ENCODE measurements at regions of chr1 and their contacts with region 1.

Region 1: DNA sequence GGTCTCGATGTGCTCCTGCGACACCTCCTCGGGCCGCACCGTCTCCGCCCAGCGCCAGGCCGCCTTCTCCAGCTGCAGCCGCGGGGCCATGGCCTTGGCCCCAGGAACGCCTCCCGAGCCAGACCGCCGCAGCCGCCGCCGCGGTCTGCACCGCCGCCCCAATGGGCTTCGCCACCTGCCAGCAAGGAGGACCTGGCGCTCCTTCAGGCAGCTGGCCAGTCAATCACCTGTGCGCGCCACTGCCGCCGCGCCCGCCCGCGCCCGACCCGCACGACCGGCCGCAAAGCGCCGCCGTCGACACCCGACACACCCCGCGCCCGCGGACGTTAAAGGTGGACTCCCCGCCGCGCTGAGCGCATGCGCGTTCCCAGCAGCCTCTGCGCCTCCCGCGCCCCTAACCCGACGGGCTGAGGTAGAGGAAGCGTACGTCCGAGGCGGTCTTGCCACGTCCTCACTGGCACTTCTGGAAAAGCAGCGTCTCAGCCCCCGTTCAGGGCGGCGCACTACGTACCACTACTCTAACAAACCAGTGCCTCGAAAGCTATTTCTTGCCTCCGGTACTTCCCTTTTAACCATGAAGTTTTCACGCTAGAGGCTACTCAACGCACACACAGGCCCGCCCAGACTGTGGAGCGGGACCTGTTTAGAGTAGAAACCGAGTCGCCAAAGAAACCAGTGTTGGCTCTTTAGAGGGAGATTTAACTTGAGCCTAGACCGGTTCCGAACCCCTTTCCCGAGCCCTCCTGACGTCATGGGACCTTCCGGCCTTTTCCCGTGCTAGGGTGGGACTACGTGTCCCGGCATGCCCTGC is at the start of gene USP48:
- DNase-seq: peak; percentile 97 to 99 (median 98)
- H3K4me3 ChIP-seq: peak within 1 kb of the TSS; percentile 64 to 100 (median 99)
- H3K27ac ChIP-seq: peak within 1 kb of the TSS; percentile 95 to 100 (median 100)
- H3K27me3 ChIP-seq: no peaks in the 10 kb centered on the region
- CTCF ChIP-seq: peak in 12 of 56 donors; percentile 4 to 34 (median 15)
- total RNA-seq, gene USP48: 77.5 to 131 (median 105) TPM

Region 2: DNA sequence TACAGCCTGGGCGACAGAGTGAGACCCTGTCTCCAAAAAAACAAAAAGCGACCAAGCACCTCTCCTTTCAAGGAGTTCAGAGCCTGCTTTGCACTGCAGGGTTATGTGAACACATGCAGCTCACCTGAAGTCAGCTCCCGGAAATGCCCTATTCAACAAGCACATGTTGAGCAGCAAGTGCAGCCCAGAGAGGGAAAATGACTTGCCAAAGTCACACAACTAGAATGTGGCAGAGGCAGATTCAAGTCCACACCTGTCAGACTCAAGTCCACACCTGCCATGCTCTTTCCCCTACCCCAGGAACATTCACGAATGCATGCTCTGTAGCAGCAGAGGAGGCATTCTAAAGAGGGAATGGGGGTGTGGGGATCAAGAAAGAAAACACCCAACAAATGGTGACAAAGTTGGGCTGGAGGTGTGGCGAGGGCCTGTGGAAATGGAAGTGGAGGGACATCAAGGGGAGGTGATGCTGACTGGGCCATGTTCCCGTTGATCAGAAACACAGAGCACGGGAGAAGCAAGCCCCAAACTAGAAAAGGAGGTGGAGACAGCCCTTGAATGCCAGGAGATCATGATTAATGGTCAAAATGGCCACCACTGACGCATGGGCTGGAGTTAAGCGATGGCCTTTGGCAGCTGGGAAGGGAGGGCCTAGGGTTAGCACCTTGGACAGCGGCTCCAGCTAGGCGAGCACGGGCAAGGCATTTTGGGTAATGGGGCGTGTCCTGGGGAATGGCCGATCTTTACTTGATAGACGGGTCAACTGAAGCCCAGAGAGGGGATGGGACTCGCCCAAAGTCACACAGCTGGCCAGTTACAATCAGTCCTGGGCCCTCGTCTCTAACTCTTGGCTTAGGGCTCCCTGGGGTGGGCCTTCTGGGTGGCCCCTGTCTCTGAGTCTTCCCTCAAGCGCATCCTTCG is 135.4 kb before region 1 on chr1:
- intact Hi-C with region 1: no loop called
- DNase-seq: no peak
- H3K4me3 ChIP-seq: no peak overlapping the region
- H3K27ac ChIP-seq: peak overlapping the region in 1 of 59 donors; percentile 5
- H3K27me3 ChIP-seq: no peaks in the 10 kb centered on the region
- CTCF ChIP-seq: no peak

Region 3: DNA sequence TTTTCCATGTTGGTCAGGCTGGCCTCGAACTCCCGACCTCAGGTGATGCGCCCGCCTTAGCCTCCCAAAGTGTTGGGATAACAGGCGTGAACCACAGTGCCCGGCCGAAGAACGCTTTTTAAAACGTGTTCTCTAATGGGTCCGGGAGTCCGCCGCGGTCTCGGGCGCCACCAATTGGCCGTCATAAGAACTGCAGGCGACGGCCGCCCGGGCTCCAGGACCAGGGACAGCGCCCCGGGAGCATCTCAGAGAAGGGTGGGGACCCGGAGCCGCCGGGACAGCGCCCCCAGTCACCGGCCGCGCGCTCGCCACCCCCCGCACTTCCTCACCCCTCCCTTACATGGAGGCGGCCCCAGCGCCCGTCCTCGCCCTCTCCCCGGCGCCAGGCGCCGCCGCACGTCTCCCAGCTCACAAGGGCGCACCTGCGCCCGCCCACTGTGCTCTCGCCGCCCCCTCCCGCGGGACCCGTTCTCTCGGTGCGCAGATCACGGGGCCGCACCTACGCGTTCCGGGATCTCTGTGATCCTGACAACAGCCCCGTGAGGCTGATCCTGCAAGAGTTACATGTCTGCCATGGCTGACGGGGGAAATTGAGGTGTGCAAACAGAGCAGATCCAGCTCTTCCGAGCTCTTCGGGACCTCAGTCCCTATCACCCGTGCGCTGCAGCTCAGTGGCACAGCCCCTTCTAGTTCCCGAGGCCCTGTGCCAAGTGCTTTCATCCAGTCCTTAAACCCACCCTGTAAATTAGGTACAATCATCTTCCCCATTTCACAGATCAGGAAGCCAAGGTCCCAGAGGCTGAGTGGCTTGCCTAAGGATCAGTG is 123.8 kb before region 1 on chr1:
- intact Hi-C with region 1: loop called in 1 of 2 experiments (anchors 5 kb)
- DNase-seq: peak; percentile 74 to 88 (median 81)
- H3K4me3 ChIP-seq: peak overlapping the region in 58 of 59 donors; percentile 3 to 62 (median 44)
- H3K27ac ChIP-seq: peak overlapping the region in 46 of 59 donors; percentile 1 to 82 (median 54)
- H3K27me3 ChIP-seq: no peaks in the 10 kb centered on the region
- CTCF ChIP-seq: peak; percentile 74 to 99 (median 94)

Region 4: DNA sequence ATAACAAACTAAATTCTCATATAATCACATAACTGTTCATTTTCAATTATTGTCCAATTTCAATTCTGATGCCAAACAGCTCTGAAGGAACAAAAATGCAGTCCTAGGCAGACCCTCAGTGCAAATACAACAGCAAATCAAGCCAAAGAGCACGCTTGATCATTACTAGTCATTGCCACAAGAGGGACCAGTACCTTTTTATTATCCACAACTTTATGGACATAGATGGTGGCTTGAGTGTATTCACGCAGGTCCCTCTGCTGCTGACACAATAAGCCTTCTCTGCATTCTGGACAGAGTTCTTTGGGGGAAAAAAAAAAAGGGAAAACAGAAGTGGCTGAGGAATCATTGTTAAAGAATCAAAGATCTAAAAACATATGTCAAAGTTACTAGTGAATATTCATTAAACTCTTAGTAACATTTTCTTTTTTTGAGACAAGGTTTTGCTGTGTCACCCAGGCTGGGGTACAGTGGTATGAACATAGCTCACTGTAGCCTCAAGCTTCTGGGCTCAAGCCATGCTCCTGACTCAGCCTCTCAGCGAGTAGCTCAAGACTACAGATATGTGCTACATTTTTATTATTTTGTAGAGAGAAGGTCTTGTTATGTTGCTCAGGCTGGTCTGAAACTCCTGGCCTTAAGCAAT is 79.6 kb before region 1 on chr1:
- intact Hi-C with region 1: loop called (anchors 2 to 5 kb)
- DNase-seq: peak in 1 of 10 donors; percentile 62
- H3K4me3 ChIP-seq: peak overlapping the region in 8 of 59 donors; percentile 8 to 55 (median 18)
- H3K27ac ChIP-seq: peak overlapping the region in 55 of 59 donors; percentile 19 to 96 (median 87)
- H3K27me3 ChIP-seq: no peaks in the 10 kb centered on the region
- CTCF ChIP-seq: peak in 55 of 56 donors; percentile 27 to 67 (median 46)

Region 5: GRCh38 chr1:21725748-21726392 is 57.2 kb before region 1 on chr1:
- intact Hi-C with region 1: no loop called
- DNase-seq: no peak
- H3K4me3 ChIP-seq: no peak overlapping the region
- H3K27ac ChIP-seq: no peak overlapping the region
- H3K27me3 ChIP-seq: no peaks in the 10 kb centered on the region
- CTCF ChIP-seq: no peak

Region 6: GRCh38 chr1:21852282-21853128 is 69.4 kb after region 1 on chr1:
- intact Hi-C with region 1: no loop called
- DNase-seq: no peak
- H3K4me3 ChIP-seq: no peak overlapping the region
- H3K27ac ChIP-seq: no peak overlapping the region
- H3K27me3 ChIP-seq: no peaks in the 10 kb centered on the region
- CTCF ChIP-seq: no peak

Region 7: DNA sequence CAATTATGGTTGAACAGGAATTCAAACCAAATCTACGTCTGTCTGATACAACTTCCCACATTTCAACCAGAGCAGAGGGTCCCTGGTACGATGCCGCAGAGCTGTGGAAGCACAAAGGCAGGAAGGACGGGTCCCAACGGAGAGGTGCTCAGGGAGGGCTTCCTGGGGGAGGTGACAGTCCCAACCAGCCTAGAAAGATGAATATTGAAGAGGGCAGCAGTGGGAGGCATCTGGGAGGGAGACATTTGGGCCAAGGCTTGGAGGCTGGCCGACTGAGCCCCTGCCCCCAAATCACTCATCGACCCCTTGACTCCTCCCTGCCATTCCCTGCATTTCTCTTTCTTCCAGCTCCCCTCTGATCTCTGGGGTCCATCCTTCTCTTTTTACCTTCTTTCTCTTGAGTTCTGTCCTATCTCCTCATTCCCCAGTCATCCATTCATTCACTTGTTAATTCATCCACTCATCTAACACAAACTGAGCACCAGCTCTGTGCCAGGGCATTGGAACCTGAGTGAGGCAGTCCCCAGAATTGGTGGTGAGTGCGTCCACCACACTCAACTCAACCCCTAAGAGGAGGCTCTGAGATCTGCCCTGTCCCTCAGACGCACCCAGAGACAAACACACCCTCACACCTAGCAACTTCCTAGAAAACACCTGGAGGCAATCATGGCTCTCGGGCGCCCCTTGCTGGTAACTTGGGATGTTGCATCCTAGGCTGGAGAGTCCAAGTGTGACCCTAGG is 180.6 kb after region 1 on chr1:
- intact Hi-C with region 1: loop called in 1 of 2 experiments (anchors 5 kb)
- DNase-seq: peak; percentile 39 to 87 (median 74)
- H3K4me3 ChIP-seq: no peak overlapping the region
- H3K27ac ChIP-seq: no peak overlapping the region
- H3K27me3 ChIP-seq: no peaks in the 10 kb centered on the region
- CTCF ChIP-seq: peak; percentile 74 to 98 (median 93)

Region 8: GRCh38 chr1:23367791-23368561 is 1584.9 kb after region 1 on chr1:
- intact Hi-C with region 1: loop called in 1 of 2 experiments (anchors 10 kb)
- DNase-seq: peak; percentile 98 to 99 (median 99)
- H3K4me3 ChIP-seq: peak overlapping the region; percentile 68 to 100 (median 93)
- H3K27ac ChIP-seq: peak overlapping the region; percentile 92 to 100 (median 99)
- H3K27me3 ChIP-seq: no peaks in the 10 kb centered on the region
- CTCF ChIP-seq: peak in 43 of 56 donors; percentile 11 to 58 (median 35)

Measured in dorsolateral prefrontal cortex (tissue), 120 donors.